ENCODE measurements at regions of chr5 and their contacts with region 1.

Region 1: DNA sequence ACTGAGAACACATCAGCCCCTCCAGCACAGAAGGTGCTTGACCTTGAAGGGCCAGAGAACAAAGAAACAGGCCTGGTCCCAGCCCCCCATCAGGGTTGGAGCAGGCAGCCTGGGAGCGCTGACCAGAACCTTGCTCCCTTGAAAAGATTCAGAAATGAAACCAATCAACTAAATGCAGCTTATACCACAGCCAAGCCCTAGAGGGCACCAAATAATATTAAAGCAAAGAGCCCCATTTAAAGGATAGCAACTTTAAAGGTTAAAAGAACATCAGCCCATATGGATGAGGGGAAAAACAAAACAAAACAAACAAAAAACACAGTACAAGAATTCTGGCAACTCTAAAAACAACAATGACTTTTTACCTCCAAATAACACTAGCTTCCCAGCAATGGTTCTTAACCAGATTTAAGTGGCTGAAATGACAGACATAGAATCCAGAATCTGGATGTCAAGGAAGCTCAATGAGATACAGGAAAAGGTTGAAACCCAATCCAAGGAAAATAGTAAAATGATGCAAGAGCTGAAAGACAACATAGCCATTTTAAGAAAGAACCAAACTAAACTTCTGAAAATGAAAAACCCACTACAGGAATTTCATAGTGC is 471.9 kb downstream of the MTRR start:
- DNase-seq: peak; percentile 23
- ATAC-seq: peak; percentile 94
- H3K4me3 ChIP-seq: no peak overlapping the region
- H3K27ac ChIP-seq: no peak overlapping the region
- H3K4me1 ChIP-seq: no peaks in the 10 kb centered on the region
- H3K27me3 ChIP-seq: no peaks in the 10 kb centered on the region; the same call in 1 of the 2 replicates
- CTCF ChIP-seq: peak; percentile 62
- POLR2A ChIP-seq: no peak
- RAD21 ChIP-seq: peak; percentile 58

Region 2: GRCh38 chr5:7927466-7928375 is 413.1 kb before region 1 on chr5:
- CTCF ChIA-PET with region 1: no interaction called
- POLR2A ChIA-PET with region 1: no interaction called
- dilution Hi-C with region 1: no loop called
- in situ Hi-C with region 1: no loop called
- intact Hi-C with region 1: loop called (anchors 1 kb)
- DNase-seq: peak; percentile 64
- ATAC-seq: peak; percentile 71
- H3K4me3 ChIP-seq: no peak overlapping the region
- H3K27ac ChIP-seq: no peak overlapping the region
- H3K4me1 ChIP-seq: peaks cover 2% of the 10 kb centered on the region
- H3K27me3 ChIP-seq: no peaks in the 10 kb centered on the region
- CTCF ChIP-seq: peak; percentile 74
- POLR2A ChIP-seq: 0 out of 2 replicates have a peak, but pooled peaks have one; percentile 41
- RAD21 ChIP-seq: peak; percentile 86

Measured in IMR-90 (cell line).